ENCODE measurements at regions of chr1 and their contacts with region 1.

Region 1: GRCh38 chr1:76377247-76377646 is 302.7 kb downstream of the ST6GALNAC3 start:
- DNase-seq: no peak
- H3K4me3 ChIP-seq: no peak overlapping the region
- H3K27ac ChIP-seq: no peak overlapping the region
- H3K4me1 ChIP-seq: no peaks in the 10 kb centered on the region
- H3K27me3 ChIP-seq: no peaks in the 10 kb centered on the region
- CTCF ChIP-seq: no peak
- POLR2A ChIP-seq: no peak

Region 2: DNA sequence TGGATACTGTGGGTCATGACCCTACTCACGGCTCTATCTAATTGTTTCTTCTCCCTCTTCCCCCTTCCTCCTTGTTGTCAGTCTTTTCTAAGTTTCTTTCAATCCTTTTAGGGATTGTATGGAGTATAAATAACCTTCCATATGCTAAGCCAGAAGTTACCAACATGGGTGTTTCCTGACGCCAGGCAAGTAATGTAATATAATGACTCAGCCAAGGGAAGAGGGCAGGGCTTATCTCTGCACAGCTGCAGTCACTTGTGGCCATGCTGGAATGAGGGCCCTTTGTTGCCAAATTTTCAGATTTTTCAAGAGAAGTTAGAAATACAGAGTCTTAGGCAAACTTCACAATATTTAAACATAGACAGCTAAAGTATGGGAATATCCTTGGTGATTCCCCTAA is 108.1 kb before region 1 on chr1:
- intact Hi-C with region 1: no loop called
- DNase-seq: no peak
- H3K4me3 ChIP-seq: no peak overlapping the region
- H3K27ac ChIP-seq: no peak overlapping the region
- H3K4me1 ChIP-seq: peaks cover 4% of the 10 kb centered on the region
- H3K27me3 ChIP-seq: no peaks in the 10 kb centered on the region
- CTCF ChIP-seq: no peak
- POLR2A ChIP-seq: no peak

Region 3: DNA sequence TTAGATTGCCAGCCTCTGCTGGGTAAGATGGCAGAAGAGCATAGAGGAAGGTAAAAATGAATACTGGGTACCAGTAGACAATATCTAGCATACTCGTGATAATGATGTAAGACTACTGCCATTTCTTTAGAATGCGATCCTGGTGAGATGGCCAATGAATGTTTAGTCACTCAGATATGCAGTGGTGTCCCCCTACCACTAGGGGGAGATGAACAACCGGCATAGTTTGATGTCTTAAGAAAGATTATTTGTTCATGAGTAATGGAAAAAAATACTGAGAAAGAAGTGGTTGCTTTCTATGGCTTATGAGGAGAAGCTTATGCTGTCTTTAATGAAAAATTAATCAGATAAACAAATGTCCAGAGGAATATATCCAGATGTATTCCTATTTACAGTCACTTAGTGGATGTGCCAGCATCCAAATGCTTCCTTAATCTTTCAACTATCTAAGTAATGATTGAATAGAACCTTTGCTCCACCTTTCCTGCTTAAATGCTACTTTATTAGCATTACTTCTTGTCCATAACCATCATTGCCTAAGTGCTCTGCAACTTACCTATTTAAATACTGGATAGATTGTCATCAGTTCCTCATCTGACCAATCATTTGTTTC is 46.1 kb before region 1 on chr1:
- intact Hi-C with region 1: no loop called
- DNase-seq: no peak
- H3K4me3 ChIP-seq: no peak overlapping the region
- H3K27ac ChIP-seq: no peak overlapping the region
- H3K4me1 ChIP-seq: no peaks in the 10 kb centered on the region
- H3K27me3 ChIP-seq: no peaks in the 10 kb centered on the region
- CTCF ChIP-seq: peak; percentile 57 to 65 (median 64)
- POLR2A ChIP-seq: no peak

Region 4: DNA sequence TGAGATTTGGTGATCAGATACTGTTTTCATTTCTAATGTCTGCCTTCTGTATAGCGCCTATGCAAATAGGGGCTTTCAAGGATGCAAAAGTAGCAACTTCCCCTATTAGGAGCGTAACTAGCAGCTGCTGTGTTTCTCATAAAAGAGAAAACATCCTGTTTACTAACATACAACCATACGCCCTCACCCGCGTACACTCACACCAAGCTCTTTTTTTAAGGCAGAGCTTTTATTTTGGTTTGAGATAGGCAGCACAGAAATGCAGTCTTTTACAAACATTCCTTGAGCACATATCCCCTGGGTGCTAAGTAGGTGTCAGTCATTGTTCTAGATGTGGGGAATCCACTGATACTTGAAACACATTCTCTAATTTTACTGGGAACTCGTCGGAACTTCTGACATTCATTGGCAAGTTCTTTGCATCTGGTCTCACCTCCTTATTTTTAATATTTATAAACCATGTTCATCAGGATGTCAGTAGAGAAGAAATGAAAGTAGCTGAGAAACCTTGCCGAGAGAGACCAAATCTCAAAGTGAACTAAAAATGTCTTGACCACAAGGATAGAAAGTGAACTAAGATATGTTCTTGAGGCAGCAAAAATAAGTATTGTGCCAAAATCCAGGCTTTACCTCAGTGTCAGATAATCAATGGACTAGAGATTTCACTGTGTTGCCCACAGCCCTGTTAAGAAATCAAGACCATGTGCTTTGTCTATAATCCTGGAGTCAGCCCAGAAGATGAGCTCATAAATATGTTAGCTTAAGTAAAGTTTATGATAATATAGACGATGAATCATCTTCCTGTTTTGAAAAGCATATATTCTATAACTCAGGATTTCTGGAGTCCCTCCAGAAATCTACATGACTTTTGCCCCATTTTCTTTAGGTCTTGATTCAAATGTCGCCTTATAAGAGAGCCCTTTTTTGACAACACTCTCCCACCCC is 48.2 kb after region 1 on chr1:
- intact Hi-C with region 1: loop called (anchors 1 kb)
- DNase-seq: no peak
- H3K4me3 ChIP-seq: no peak overlapping the region
- H3K27ac ChIP-seq: no peak overlapping the region
- H3K4me1 ChIP-seq: no peaks in the 10 kb centered on the region
- H3K27me3 ChIP-seq: no peaks in the 10 kb centered on the region
- CTCF ChIP-seq: no peak
- POLR2A ChIP-seq: no peak

Region 5: GRCh38 chr1:76465030-76465429 is 87.8 kb after region 1 on chr1:
- intact Hi-C with region 1: no loop called
- DNase-seq: no peak
- H3K4me3 ChIP-seq: no peak overlapping the region
- H3K27ac ChIP-seq: no peak overlapping the region
- H3K4me1 ChIP-seq: no peaks in the 10 kb centered on the region
- H3K27me3 ChIP-seq: no peaks in the 10 kb centered on the region
- CTCF ChIP-seq: no peak
- POLR2A ChIP-seq: no peak

Measured in vagina (tissue), 2 donors.